B cell (primary cell): ENCODE measurements at regions of chr6 and their contacts with region 1.

Region 1: GRCh38 chr6:2634139-2634964 is 116.4 kb downstream of the MYLK4 start:
- DNase-seq: peak; percentile 83
- ATAC-seq: peak; percentile 96
- H3K4me3 ChIP-seq: peak overlapping the region in 4 of 5 experiments; percentile 34 to 63 (median 48)
- H3K4me3 Mint-ChIP-seq: peak overlapping the region; percentile 80
- H3K27ac ChIP-seq: no peak overlapping the region
- H3K27ac Mint-ChIP-seq: peak overlapping the region; percentile 26
- H3K4me1 ChIP-seq: peaks cover 5 to 10% of the 10 kb centered on the region in 2 donors
- H3K4me1 Mint-ChIP-seq: peaks cover 6% of the 10 kb centered on the region
- H3K27me3 ChIP-seq: peaks cover 0 to 5% (median under 1%) of the 10 kb centered on the region in 4 experiments
- H3K27me3 Mint-ChIP-seq: peaks cover 18% of the 10 kb centered on the region
- CTCF ChIP-seq: peak; percentile 97

Region 2: GRCh38 chr6:1604158-1605030 is 1030.0 kb before region 1 on chr6:
- CTCF ChIA-PET with region 1: interaction called, 143 read pairs
- POLR2A ChIA-PET with region 1: no interaction called
- intact Hi-C with region 1: loop called (anchors 2 kb)
- DNase-seq: peak; percentile 84
- ATAC-seq: peak; percentile 81
- H3K4me3 ChIP-seq: peak overlapping the region in 4 of 5 experiments; percentile 10 to 59 (median 42)
- H3K4me3 Mint-ChIP-seq: peak overlapping the region; percentile 34
- H3K27ac ChIP-seq: no peak overlapping the region
- H3K27ac Mint-ChIP-seq: no peak overlapping the region
- H3K4me1 ChIP-seq: peaks cover 50 to 52% of the 10 kb centered on the region in 2 donors
- H3K4me1 Mint-ChIP-seq: peaks cover 34% of the 10 kb centered on the region
- H3K27me3 ChIP-seq: peaks cover 0 to 83% (median 66%) of the 10 kb centered on the region in 4 experiments
- H3K27me3 Mint-ChIP-seq: peaks cover 73% of the 10 kb centered on the region
- CTCF ChIP-seq: peak; percentile 99

Region 3: GRCh38 chr6:2103644-2104523 is 530.5 kb before region 1 on chr6:
- CTCF ChIA-PET with region 1: interaction called, 6 read pairs
- POLR2A ChIA-PET with region 1: no interaction called
- intact Hi-C with region 1: loop called (anchors 10 kb)
- DNase-seq: peak; percentile 50
- ATAC-seq: peak; percentile 36
- H3K4me3 ChIP-seq: no peak overlapping the region
- H3K4me3 Mint-ChIP-seq: no peak overlapping the region
- H3K27ac ChIP-seq: no peak overlapping the region
- H3K27ac Mint-ChIP-seq: no peak overlapping the region
- H3K4me1 ChIP-seq: no peaks in the 10 kb centered on the region
- H3K4me1 Mint-ChIP-seq: no peaks in the 10 kb centered on the region
- H3K27me3 ChIP-seq: no peaks in the 10 kb centered on the region
- H3K27me3 Mint-ChIP-seq: no peaks in the 10 kb centered on the region
- CTCF ChIP-seq: peak; percentile 77

Region 4: GRCh38 chr6:2209226-2209809 is 425.0 kb before region 1 on chr6:
- CTCF ChIA-PET with region 1: interaction called, 17 read pairs
- POLR2A ChIA-PET with region 1: no interaction called
- intact Hi-C with region 1: no loop called
- DNase-seq: peak; percentile 55
- ATAC-seq: peak; percentile 53
- H3K4me3 ChIP-seq: no peak overlapping the region
- H3K4me3 Mint-ChIP-seq: no peak overlapping the region
- H3K27ac ChIP-seq: no peak overlapping the region
- H3K27ac Mint-ChIP-seq: no peak overlapping the region
- H3K4me1 ChIP-seq: no peaks in the 10 kb centered on the region
- H3K4me1 Mint-ChIP-seq: no peaks in the 10 kb centered on the region
- H3K27me3 ChIP-seq: no peaks in the 10 kb centered on the region
- H3K27me3 Mint-ChIP-seq: no peaks in the 10 kb centered on the region
- CTCF ChIP-seq: peak; percentile 42

Region 5: DNA sequence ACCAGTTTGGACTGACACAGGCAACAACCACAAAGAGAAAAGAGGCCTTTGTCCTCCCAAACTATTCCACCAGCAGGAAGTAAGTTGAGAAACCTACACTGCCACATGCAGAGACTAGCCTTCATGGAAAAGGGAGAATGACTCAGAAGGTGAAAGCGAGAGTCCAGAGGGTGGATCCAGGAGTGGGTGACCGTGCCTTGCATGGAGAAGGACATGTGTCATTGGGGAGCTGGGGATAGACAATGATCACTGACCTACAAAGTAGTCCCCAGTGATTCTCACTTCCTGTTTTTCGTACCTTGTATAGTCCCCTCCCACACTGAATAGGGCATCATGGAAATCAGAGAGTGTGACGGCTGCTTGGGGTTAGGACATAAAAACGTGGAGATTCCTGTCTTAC is 24.4 kb after region 1 on chr6:
- CTCF ChIA-PET with region 1: interaction called, 14 read pairs
- POLR2A ChIA-PET with region 1: no interaction called
- intact Hi-C with region 1: no loop called
- DNase-seq: peak; percentile 65
- ATAC-seq: peak; percentile 97
- H3K4me3 ChIP-seq: no peak overlapping the region
- H3K4me3 Mint-ChIP-seq: no peak overlapping the region
- H3K27ac ChIP-seq: no peak overlapping the region
- H3K27ac Mint-ChIP-seq: peak overlapping the region; percentile 17
- H3K4me1 ChIP-seq: peaks cover 9% of the 10 kb centered on the region in 2 donors
- H3K4me1 Mint-ChIP-seq: peaks cover 25% of the 10 kb centered on the region
- H3K27me3 ChIP-seq: no peaks in the 10 kb centered on the region
- H3K27me3 Mint-ChIP-seq: no peaks in the 10 kb centered on the region
- CTCF ChIP-seq: no peak

Region 6: GRCh38 chr6:2669067-2669700 is 34.8 kb after region 1 on chr6:
- CTCF ChIA-PET with region 1: no interaction called
- POLR2A ChIA-PET with region 1: no interaction called
- intact Hi-C with region 1: no loop called
- DNase-seq: no peak
- ATAC-seq: no peak
- H3K4me3 ChIP-seq: no peak overlapping the region
- H3K4me3 Mint-ChIP-seq: no peak overlapping the region
- H3K27ac ChIP-seq: no peak overlapping the region
- H3K27ac Mint-ChIP-seq: no peak overlapping the region
- H3K4me1 ChIP-seq: no peaks in the 10 kb centered on the region
- H3K4me1 Mint-ChIP-seq: no peaks in the 10 kb centered on the region
- H3K27me3 ChIP-seq: no peaks in the 10 kb centered on the region
- H3K27me3 Mint-ChIP-seq: peaks cover 3% of the 10 kb centered on the region
- CTCF ChIP-seq: no peak